K562 (cell line): ENCODE measurements at regions of chr9 and their contacts with region 1.

Region 1: DNA sequence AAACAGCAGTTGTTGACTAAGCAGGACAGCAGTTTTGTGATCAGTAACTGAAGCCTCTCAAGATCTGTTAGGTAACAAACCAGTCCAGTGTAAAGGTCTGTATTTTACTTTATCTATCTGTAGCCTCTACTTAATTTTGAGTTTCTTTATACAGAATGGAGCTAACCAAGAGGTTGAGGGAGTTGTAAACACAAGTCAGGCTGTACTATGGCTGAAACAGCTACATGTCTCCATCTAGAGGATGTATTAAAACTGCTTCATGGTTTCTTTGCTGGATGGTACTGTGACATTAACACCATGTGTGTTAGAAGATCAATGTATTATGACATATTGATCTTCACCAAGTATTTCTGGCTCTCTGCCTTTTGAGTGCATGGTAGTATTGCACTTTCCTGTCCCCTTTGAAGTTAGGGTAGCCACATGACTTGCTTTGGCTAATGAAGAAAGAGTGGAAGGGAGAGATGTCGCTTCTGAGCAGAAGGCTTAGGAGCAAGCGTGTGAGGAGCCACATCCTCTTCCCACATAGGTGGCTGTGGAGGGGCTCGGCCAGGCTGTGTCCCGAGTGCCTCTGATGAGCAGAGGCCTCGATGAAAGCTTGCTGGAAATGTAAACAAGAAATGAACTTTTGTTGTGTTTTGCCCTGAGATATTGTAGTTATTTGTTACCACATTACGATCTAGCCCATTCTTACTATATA is 105.6 kb upstream of the PCA3 start:
- DNase-seq: peak in 3 of 4 experiments; percentile 7 to 32 (median 28)
- ATAC-seq: peak; percentile 88
- H3K4me3 ChIP-seq: no peak overlapping the region
- H3K27ac ChIP-seq: no peak overlapping the region
- H3K4me1 ChIP-seq: peaks cover 0 to 16% of the 10 kb centered on the region in 2 experiments; a peak in 4 of 5 replicates
- H3K27me3 ChIP-seq: no peaks in the 10 kb centered on the region
- CTCF ChIP-seq: peak; percentile 45 to 71 (median 45); a peak in 5 of 6 replicates
- EP300 ChIP-seq: no peak
- POLR2A ChIP-seq: no peak
- RAD21 ChIP-seq: peak; percentile 79 to 86

Region 2: DNA sequence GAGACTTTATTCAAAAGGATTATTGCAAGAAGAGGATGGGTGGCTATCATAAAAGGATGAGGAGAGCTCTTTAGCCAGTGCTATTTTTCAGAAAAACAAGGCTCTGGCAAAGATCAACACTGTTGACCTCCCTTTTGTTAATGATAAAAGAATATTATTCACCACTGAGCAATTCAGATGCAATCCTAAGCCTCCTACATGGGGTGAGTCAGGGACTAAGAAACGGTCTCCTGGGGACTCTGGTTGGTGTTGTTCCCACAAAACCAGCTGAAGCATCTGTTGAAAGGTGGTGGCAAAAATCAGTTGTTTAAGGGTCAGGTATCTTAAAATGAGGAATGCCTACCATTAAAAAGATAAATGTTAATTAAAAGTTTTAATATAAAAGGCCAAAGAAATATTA is 207.4 kb before region 1 on chr9:
- CTCF ChIA-PET with region 1: no interaction called
- POLR2A ChIA-PET with region 1: no interaction called
- in situ Hi-C with region 1: loop called (anchors 10 kb)
- intact Hi-C with region 1: loop called (anchors 1 kb)
- DNase-seq: no peak
- ATAC-seq: no peak
- H3K4me3 ChIP-seq: no peak overlapping the region
- H3K27ac ChIP-seq: no peak overlapping the region
- H3K4me1 ChIP-seq: no peaks in the 10 kb centered on the region; a peak in 1 of 5 replicates
- H3K27me3 ChIP-seq: no peaks in the 10 kb centered on the region; a peak in 1 of 5 replicates
- CTCF ChIP-seq: no peak
- EP300 ChIP-seq: no peak
- POLR2A ChIP-seq: no peak
- RAD21 ChIP-seq: no peak

Region 3: DNA sequence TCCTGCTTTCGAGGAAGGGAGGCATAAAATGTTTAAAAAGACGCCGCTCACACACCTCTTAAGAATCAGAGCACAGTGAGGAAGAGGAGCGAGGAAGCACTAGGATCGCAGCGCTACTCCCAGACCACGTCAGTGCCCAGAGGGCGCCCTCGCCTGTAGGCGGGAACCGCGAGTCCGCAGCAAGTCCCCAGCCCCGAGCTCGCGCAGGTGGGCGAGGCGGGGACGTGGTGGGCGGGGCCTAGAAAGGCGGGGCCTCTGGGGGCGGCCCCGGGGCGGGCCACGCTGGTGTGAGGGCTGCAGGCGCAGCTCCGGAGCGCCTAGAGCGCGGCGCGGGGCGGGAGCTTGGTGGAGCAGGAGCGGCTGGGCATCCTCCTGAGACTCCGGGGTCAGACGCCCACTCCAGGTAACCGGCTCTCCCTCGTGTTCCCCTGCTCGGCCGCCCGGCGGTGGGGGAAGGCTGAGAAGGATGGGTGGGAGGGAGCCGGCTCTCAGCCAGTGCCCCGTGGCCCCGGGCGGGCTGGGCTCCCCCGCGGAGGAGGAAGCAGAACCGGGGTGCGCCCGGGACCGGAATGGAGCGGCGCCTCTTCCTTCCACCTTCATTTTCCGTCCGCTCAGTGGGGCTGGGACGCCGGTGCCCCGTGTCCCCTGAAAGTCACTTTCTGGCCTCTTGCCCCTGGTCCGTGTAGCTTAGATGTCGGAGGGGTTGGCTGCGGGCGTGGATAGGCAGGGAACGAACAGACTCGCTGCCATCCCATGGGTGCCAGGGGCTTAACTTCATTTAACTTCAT is 199.6 kb before region 1 on chr9 and contains the start of gene GCNT1:
- CTCF ChIA-PET with region 1: no interaction called
- POLR2A ChIA-PET with region 1: no interaction called
- in situ Hi-C with region 1: loop called (anchors 10 kb)
- intact Hi-C with region 1: no loop called
- DNase-seq: peak; percentile 83 to 90 (median 88)
- ATAC-seq: peak; percentile 100
- H3K4me3 ChIP-seq: peak within 1 kb of the TSS; percentile 34
- H3K27ac ChIP-seq: no peak within 1 kb of the TSS
- H3K4me1 ChIP-seq: peaks cover 4 to 13% of the 10 kb centered on the region in 2 experiments; a peak in 3 of 5 replicates
- H3K27me3 ChIP-seq: peaks cover 0 to 4% of the 10 kb centered on the region in 2 experiments; a peak in 1 of 5 replicates
- CTCF ChIP-seq: peak; percentile 34 to 51 (median 35); a peak in 4 of 6 replicates
- EP300 ChIP-seq: no peak
- POLR2A ChIP-seq: no peak
- RAD21 ChIP-seq: peak; percentile 26 to 41; a peak in 2 of 4 replicates
- polyA plus RNA-seq, gene GCNT1: 0.01 to 0.07 TPM

Region 4: DNA sequence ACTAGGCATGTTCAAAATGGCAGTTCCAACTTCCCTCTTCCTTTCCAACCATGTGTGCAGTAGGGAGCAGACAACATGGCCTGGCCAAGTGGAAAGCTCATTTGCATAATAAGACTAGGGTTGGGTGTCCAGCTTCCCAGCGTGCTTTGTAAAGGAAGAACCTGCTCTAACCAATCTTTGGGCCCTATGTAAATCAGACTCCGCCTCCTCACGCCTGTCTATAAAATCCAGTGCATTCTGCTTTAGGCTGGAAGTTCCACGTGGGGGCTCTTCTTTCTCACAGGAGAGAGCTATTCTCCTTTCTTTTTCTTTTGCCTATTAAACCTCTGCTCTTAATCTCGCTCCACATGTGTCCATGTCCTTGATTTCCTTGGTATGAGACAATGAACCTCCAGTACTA is 116.3 kb before region 1 on chr9:
- CTCF ChIA-PET with region 1: no interaction called
- POLR2A ChIA-PET with region 1: no interaction called
- in situ Hi-C with region 1: no loop called
- intact Hi-C with region 1: loop called (anchors 5 kb)
- DNase-seq: peak in 2 of 4 experiments; percentile 38 to 62
- ATAC-seq: peak; percentile 97
- H3K4me3 ChIP-seq: no peak overlapping the region
- H3K27ac ChIP-seq: peak overlapping the region; percentile 38; the same call in 1 of the 3 replicates
- H3K4me1 ChIP-seq: no peaks in the 10 kb centered on the region; a peak in 1 of 5 replicates
- H3K27me3 ChIP-seq: no peaks in the 10 kb centered on the region; a peak in 1 of 5 replicates
- CTCF ChIP-seq: peak in 1 of 3 experiments; percentile 31; a peak in 2 of 6 replicates
- EP300 ChIP-seq: no peak
- POLR2A ChIP-seq: no peak
- RAD21 ChIP-seq: peak; percentile 19 to 48; a peak in 2 of 4 replicates